ENCODE measurements at regions of chr1 and their contacts with region 1.

Region 1: GRCh38 chr1:33295450-33296081 is 25.3 kb downstream of the A3GALT2 start:
- DNase-seq: peak; percentile 64
- ATAC-seq: peak; percentile 97
- H3K4me3 ChIP-seq: no peak overlapping the region
- H3K27ac ChIP-seq: no peak overlapping the region
- H3K4me1 ChIP-seq: no peaks in the 10 kb centered on the region
- H3K27me3 ChIP-seq: no peaks in the 10 kb centered on the region
- CTCF ChIP-seq: peak; percentile 97 to 99 (median 98); a peak in 5 of 6 replicates
- EP300 ChIP-seq: no peak
- POLR2A ChIP-seq: no peak
- RAD21 ChIP-seq: peak; percentile 77

Region 2: DNA sequence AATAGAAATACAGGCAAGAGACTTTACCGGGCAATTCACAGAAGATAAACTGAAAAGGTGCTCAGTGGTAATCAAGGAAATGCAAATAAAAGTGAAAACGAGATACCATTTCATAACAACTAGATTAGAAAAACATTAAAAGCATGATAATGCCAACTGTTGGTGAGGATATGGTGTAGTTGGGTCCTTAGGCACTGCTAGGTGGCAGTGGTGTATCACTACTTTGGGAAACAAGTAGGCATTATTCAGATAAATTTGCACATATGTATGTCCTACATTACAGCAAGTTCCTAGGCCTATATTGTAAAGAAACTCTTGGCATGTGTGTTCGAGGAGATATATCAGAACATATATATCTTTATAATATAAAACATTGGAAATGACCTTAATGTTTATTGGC is 183.6 kb before region 1 on chr1:
- CTCF ChIA-PET with region 1: interaction called, 11 read pairs
- POLR2A ChIA-PET with region 1: no interaction called
- RAD21 ChIA-PET with region 1: interaction called, 4 read pairs
- SMC1A ChIA-PET with region 1: interaction called, 4 read pairs
- in situ Hi-C with region 1: no loop called
- intact Hi-C with region 1: loop called (anchors 5 kb)
- DNase-seq: no peak
- ATAC-seq: peak; percentile 79
- H3K4me3 ChIP-seq: no peak overlapping the region
- H3K27ac ChIP-seq: no peak overlapping the region
- H3K4me1 ChIP-seq: no peaks in the 10 kb centered on the region
- H3K27me3 ChIP-seq: no peaks in the 10 kb centered on the region
- CTCF ChIP-seq: peak; percentile 37 to 64 (median 44); a peak in 4 of 6 replicates
- EP300 ChIP-seq: no peak
- POLR2A ChIP-seq: no peak
- RAD21 ChIP-seq: peak; percentile 59

Region 3: DNA sequence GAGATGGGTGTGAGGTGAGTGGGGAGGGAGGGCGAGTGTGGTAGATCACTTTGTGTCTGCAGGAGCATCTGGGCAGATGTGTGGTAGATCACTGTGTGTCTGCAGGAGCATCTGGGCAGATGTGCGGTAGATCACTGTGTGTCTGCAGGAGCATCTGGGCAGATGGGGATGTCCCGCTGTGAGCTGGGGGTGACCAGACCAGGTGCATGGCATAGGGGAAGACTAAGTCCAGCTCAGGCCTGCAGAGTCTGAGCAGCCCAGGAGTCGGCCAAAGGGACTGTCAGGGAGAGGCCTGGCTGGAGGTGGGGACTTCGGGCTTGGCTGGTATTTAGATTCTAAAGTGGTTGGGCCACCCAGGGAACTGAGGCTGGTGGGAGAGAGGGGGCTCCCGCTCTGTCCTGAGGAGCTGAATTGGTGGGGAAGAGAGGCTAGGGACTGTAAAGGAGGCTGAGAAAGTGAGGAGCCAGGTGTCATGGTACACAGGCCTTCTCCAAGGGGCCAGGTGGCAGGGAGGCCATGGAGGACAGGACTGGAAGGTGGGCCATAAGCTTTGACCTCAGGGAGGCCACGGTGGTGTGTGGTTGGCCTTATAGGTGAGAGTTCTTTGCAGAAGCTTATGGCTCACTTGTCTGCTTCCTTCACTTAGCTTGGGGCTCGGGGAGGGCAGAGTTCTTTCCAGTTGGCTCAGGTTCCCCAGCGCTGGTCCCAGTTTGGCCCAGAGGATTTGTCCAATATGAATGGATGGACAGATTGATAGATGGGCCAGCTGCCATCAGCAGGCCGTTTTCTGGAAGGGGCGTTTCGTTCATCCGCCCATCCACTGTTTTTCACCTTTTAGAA is 23.7 kb before region 1 on chr1:
- CTCF ChIA-PET with region 1: interaction called, 10 read pairs
- POLR2A ChIA-PET with region 1: no interaction called
- RAD21 ChIA-PET with region 1: interaction called, 3 read pairs
- SMC1A ChIA-PET with region 1: interaction called, 5 read pairs
- in situ Hi-C with region 1: no loop called
- intact Hi-C with region 1: no loop called
- DNase-seq: no peak
- ATAC-seq: no peak
- H3K4me3 ChIP-seq: no peak overlapping the region
- H3K27ac ChIP-seq: no peak overlapping the region
- H3K4me1 ChIP-seq: peaks cover 6% of the 10 kb centered on the region
- H3K27me3 ChIP-seq: no peaks in the 10 kb centered on the region
- CTCF ChIP-seq: no peak
- EP300 ChIP-seq: no peak
- POLR2A ChIP-seq: no peak
- RAD21 ChIP-seq: no peak

Region 4: GRCh38 chr1:33342041-33342723 is 46.6 kb after region 1 on chr1:
- CTCF ChIA-PET with region 1: interaction called, 24 read pairs
- POLR2A ChIA-PET with region 1: interaction called, 6 read pairs
- RAD21 ChIA-PET with region 1: interaction called, 5 read pairs
- SMC1A ChIA-PET with region 1: interaction called, 8 read pairs
- in situ Hi-C with region 1: no loop called
- intact Hi-C with region 1: no loop called
- DNase-seq: peak; percentile 33
- ATAC-seq: peak; percentile 54
- H3K4me3 ChIP-seq: peak overlapping the region; percentile 35; the same call in 1 of the 2 replicates
- H3K27ac ChIP-seq: peak overlapping the region; percentile 50
- H3K4me1 ChIP-seq: peaks cover 25% of the 10 kb centered on the region
- H3K27me3 ChIP-seq: no peaks in the 10 kb centered on the region
- CTCF ChIP-seq: no peak
- EP300 ChIP-seq: no peak
- POLR2A ChIP-seq: no peak
- RAD21 ChIP-seq: no peak

Region 5: DNA sequence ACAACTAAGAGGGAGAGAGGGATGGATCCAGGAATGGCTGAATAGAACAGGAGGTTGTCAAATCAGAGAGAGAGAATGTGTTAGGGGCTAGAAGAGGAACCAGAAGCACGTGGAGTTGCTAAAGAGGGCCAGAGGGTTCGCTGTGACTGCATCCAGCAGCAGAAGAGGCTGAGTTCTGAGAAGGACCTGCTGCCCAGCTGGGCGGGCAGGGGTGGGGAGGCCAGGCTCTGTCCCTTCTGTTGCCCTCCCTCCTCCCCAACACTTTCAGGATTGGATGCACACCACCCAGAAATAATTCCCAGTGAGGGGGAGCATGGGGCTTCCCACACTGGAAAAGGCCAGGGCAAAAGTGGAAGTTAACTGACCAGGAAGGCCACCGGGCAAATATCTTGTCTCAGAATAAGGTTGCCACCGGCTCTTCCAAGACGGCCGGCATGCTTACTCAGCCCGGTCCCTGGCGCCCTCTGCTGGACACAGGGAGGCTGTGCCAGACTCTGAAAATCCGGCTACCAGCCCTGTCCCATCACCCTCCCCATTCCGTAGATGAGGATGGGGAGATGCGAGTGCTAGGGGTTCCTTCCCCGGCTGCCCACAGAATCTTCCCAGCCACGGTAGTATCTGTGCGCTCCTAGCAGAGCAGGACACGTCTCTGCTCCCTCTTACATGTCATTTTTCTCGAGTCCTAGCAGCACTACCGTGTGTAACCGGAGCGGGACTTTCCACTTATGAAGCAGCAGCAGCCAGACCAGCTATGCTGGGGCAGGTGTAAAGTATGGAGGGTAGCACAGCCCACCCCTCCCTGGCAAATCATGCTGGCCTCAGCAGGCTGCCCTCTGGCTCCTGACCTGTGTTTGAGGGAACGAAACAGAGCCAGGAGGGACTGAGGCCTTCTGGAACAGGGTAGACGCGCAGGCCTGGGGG is 72.2 kb after region 1 on chr1:
- CTCF ChIA-PET with region 1: interaction called, 47 read pairs
- POLR2A ChIA-PET with region 1: no interaction called
- RAD21 ChIA-PET with region 1: interaction called, 21 read pairs
- SMC1A ChIA-PET with region 1: interaction called, 71 read pairs
- in situ Hi-C with region 1: loop called (anchors 5 kb)
- intact Hi-C with region 1: loop called (anchors 1 kb)
- DNase-seq: no peak
- ATAC-seq: peak; percentile 97
- H3K4me3 ChIP-seq: no peak overlapping the region
- H3K27ac ChIP-seq: no peak overlapping the region
- H3K4me1 ChIP-seq: no peaks in the 10 kb centered on the region
- H3K27me3 ChIP-seq: peaks cover 0 to 6% of the 10 kb centered on the region in 2 experiments; a peak in 1 of 4 replicates
- CTCF ChIP-seq: peak; percentile 96 to 99 (median 97); a peak in 5 of 6 replicates
- EP300 ChIP-seq: no peak
- POLR2A ChIP-seq: no peak
- RAD21 ChIP-seq: peak; percentile 98

Region 6: GRCh38 chr1:33396188-33397124 is 100.9 kb after region 1 on chr1:
- CTCF ChIA-PET with region 1: no interaction called
- POLR2A ChIA-PET with region 1: no interaction called
- RAD21 ChIA-PET with region 1: no interaction called
- SMC1A ChIA-PET with region 1: no interaction called
- in situ Hi-C with region 1: no loop called
- intact Hi-C with region 1: no loop called
- DNase-seq: no peak
- ATAC-seq: no peak
- H3K4me3 ChIP-seq: no peak overlapping the region
- H3K27ac ChIP-seq: no peak overlapping the region
- H3K4me1 ChIP-seq: 0 out of 2 replicates have a peak, but pooled peaks cover 3% of the 10 kb centered on the region
- H3K27me3 ChIP-seq: no peaks in the 10 kb centered on the region; a peak in 1 of 4 replicates
- CTCF ChIP-seq: no peak
- EP300 ChIP-seq: no peak
- POLR2A ChIP-seq: no peak
- RAD21 ChIP-seq: no peak

Region 7: DNA sequence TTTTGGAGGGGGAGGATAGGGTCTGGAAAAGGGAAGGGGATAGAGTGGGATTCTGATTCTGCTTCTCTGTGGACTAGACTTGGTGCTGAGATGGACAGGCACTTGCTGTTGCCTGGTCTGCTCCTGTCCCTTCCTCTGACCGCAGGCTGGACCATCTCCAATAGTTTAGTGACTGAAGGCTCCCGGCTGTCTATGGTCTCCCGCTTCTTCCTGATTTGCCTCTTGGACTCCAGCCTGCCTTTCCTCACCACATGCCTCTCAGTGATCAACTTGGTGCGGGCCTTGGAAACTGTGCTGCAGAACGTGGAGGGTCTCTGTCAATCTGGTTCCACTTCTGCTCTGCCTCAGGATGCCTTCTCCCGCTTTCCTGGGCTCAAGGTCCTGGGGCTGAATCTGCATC is 170.6 kb after region 1 on chr1:
- CTCF ChIA-PET with region 1: interaction called, 239 read pairs
- POLR2A ChIA-PET with region 1: interaction called, 8 read pairs
- RAD21 ChIA-PET with region 1: interaction called, 103 read pairs
- SMC1A ChIA-PET with region 1: interaction called, 149 read pairs
- in situ Hi-C with region 1: loop called (anchors 5 kb)
- intact Hi-C with region 1: loop called (anchors 1 kb)
- DNase-seq: no peak
- ATAC-seq: no peak
- H3K4me3 ChIP-seq: no peak overlapping the region
- H3K27ac ChIP-seq: no peak overlapping the region
- H3K4me1 ChIP-seq: peaks cover 35% of the 10 kb centered on the region
- H3K27me3 ChIP-seq: no peaks in the 10 kb centered on the region
- CTCF ChIP-seq: no peak
- EP300 ChIP-seq: no peak
- POLR2A ChIP-seq: no peak
- RAD21 ChIP-seq: no peak

Region 8: GRCh38 chr1:33541966-33542365 is 246.4 kb after region 1 on chr1:
- CTCF ChIA-PET with region 1: no interaction called
- POLR2A ChIA-PET with region 1: no interaction called
- RAD21 ChIA-PET with region 1: no interaction called
- SMC1A ChIA-PET with region 1: no interaction called
- in situ Hi-C with region 1: no loop called
- intact Hi-C with region 1: no loop called
- DNase-seq: no peak
- ATAC-seq: no peak
- H3K4me3 ChIP-seq: no peak overlapping the region
- H3K27ac ChIP-seq: no peak overlapping the region
- H3K4me1 ChIP-seq: no peaks in the 10 kb centered on the region
- H3K27me3 ChIP-seq: no peaks in the 10 kb centered on the region; a peak in 2 of 4 replicates
- CTCF ChIP-seq: no peak
- EP300 ChIP-seq: no peak
- POLR2A ChIP-seq: no peak
- RAD21 ChIP-seq: no peak

Region 9: GRCh38 chr1:33616773-33617172 is 321.2 kb after region 1 on chr1:
- CTCF ChIA-PET with region 1: interaction called, 19 read pairs
- POLR2A ChIA-PET with region 1: no interaction called
- RAD21 ChIA-PET with region 1: interaction called, 4 read pairs
- SMC1A ChIA-PET with region 1: interaction called, 10 read pairs
- in situ Hi-C with region 1: loop called (anchors 5 kb)
- intact Hi-C with region 1: loop called (anchors 2 kb)
- DNase-seq: no peak
- ATAC-seq: no peak
- H3K4me3 ChIP-seq: no peak overlapping the region
- H3K27ac ChIP-seq: no peak overlapping the region
- H3K4me1 ChIP-seq: no peaks in the 10 kb centered on the region
- H3K27me3 ChIP-seq: peaks cover 2 to 3% of the 10 kb centered on the region in 2 experiments; a peak in 3 of 4 replicates
- CTCF ChIP-seq: no peak
- EP300 ChIP-seq: no peak
- POLR2A ChIP-seq: no peak
- RAD21 ChIP-seq: no peak

Region 10: DNA sequence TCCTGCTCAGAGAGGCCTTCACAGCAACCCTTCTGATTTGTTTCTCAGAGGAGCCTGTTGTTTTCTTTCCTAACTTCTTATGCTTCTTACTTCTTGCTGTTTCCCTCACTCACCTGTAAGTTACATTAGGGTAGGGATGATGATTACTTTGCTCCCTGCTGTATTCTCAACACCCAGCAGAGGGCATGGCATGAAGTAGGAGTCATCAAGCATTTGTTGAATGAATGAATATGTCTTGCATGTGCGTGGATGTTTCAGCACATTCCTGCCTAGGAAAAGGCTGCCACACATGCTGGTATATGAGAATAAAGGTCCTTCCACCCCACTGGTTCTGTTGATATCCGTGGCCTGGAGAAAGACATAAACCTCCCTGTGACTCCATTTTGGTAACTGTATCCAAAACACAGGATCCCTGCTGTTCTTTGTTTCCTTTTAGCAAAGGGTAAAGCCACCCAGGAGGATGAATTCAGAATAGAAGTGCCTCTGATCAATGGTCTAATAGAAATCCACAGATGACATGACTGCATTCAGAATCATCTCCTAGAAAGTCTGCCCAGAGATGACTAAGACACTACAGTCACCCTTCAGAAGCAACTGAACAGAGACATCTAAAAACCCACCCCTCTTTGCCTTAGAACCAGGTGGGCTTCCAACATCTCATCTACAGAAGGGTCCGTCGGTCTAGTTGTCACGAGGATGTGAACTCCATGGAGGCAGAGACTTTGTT is 345.7 kb after region 1 on chr1:
- CTCF ChIA-PET with region 1: no interaction called
- POLR2A ChIA-PET with region 1: no interaction called
- RAD21 ChIA-PET with region 1: no interaction called
- SMC1A ChIA-PET with region 1: no interaction called
- in situ Hi-C with region 1: no loop called
- intact Hi-C with region 1: no loop called
- DNase-seq: no peak
- ATAC-seq: 0 out of 3 replicates have a peak, but pooled peaks have one; percentile 42
- H3K4me3 ChIP-seq: no peak overlapping the region
- H3K27ac ChIP-seq: no peak overlapping the region
- H3K4me1 ChIP-seq: no peaks in the 10 kb centered on the region
- H3K27me3 ChIP-seq: peaks cover 4% of the 10 kb centered on the region in 2 experiments; a peak in 1 of 4 replicates
- CTCF ChIP-seq: peak; percentile 45 to 50 (median 49); a peak in 3 of 6 replicates
- EP300 ChIP-seq: no peak
- POLR2A ChIP-seq: no peak
- RAD21 ChIP-seq: peak; percentile 27; the same call in 1 of the 2 replicates

Measured in GM12878 (cell line).